PC-3 (cell line): ENCODE measurements at regions of chr3 and their contacts with region 1.

Region 1: DNA sequence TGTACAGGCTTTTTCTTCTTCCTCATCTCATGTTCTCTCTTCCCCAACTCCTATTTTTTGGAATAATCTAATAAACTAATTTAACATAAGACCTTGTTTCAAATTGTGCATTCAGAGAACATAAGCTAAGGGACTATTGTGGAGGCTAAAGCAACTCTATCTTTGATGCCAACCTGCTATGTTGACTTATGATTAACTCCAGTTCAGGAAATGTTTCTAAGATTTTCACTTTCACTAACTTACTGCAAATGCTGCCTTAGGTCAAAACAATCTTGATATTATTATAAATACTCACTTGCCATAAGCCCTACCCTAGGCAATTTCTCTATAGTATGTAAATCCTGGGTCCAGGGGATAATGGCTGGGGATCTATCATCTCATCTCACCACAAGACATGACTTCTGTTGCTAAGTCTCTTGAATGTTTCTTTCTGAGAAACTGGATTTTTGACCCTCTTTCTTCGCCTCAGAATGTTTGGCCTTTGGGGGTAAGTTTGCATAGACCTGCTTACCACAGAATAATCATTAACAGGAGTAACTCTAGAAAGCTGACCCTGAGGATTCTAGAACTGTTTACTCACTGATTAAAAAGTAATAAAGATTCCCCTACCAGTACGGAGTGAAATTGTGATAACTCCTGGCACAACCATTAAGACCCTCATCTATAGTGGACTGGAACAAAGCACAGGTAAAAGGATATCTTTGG is 768.1 kb downstream of the GBE1 start:
- DNase-seq: no peak
- ATAC-seq: no peak
- H3K4me3 ChIP-seq: no peak overlapping the region
- H3K27ac ChIP-seq: peak overlapping the region; percentile 59
- H3K4me1 ChIP-seq: peaks cover 21% of the 10 kb centered on the region
- H3K27me3 ChIP-seq: no peaks in the 10 kb centered on the region
- CTCF ChIP-seq: no peak

Region 2: DNA sequence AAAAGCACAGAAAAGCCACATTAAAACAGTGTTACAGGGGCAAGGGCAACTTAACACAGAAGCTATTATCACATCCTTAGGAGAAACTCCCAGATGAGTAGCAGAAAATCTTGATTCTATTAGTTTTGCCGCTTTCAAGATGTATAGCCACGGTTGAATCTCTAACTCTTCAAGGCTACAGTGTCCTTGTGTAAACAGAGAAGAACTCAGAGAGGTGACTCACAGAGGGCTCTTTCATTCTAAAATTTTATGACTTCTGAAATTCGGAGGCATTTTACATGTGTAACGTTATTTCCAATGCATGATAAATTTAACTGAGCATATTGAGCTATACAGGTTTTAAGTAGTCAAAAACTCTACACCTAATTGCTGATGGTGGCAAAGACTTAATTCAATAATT is 78.5 kb before region 1 on chr3:
- CTCF ChIA-PET with region 1: no interaction called
- POLR2A ChIA-PET with region 1: no interaction called
- intact Hi-C with region 1: loop called (anchors 2 kb)
- DNase-seq: peak; percentile 66
- ATAC-seq: peak; percentile 100
- H3K4me3 ChIP-seq: no peak overlapping the region
- H3K27ac ChIP-seq: no peak overlapping the region
- H3K4me1 ChIP-seq: peaks cover 8% of the 10 kb centered on the region
- H3K27me3 ChIP-seq: no peaks in the 10 kb centered on the region
- CTCF ChIP-seq: no peak

Region 3: DNA sequence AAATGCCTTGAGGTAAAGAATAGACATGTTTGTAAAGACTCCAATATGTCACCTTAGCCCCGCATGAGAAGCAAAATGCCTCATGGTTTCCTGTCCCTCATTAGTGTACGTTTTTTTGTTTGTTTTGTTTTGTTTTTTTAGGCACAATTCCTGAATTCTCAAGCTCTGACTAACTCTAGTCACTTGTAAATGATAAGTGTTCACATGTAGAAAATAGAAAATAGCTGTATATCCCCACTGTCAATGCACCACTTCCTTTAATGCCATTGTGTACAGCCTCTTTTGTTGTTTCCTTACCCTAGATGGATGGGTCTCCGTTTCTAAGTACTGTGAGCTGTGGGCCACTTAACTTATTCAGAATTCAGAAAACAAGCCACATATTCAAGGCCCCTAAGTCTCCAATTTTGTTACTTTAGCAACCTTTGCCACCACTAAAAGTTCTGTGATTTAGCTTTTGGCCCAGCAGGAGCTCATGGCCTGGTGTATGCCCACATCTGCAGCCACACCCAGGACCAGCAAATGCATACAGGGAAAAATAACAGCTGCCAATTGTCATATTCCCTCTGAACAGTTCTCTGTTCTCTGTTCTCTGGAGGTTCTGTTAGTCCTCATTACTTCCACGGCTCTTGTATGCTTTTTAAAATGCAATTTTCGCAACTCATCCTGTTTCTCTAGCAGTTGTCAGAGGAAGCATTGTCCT is 112.5 kb after region 1 on chr3:
- CTCF ChIA-PET with region 1: no interaction called
- POLR2A ChIA-PET with region 1: no interaction called
- intact Hi-C with region 1: loop called (anchors 1 kb)
- DNase-seq: peak; percentile 87
- ATAC-seq: peak; percentile 94
- H3K4me3 ChIP-seq: no peak overlapping the region; the same call in 1 of the 2 replicates
- H3K27ac ChIP-seq: peak overlapping the region; percentile 42
- H3K4me1 ChIP-seq: peaks cover 17% of the 10 kb centered on the region
- H3K27me3 ChIP-seq: no peaks in the 10 kb centered on the region
- CTCF ChIP-seq: no peak

Region 4: GRCh38 chr3:81289676-81290075 is 296.3 kb after region 1 on chr3:
- CTCF ChIA-PET with region 1: no interaction called
- POLR2A ChIA-PET with region 1: no interaction called
- intact Hi-C with region 1: no loop called
- DNase-seq: no peak
- ATAC-seq: no peak
- H3K4me3 ChIP-seq: no peak overlapping the region
- H3K27ac ChIP-seq: no peak overlapping the region
- H3K4me1 ChIP-seq: no peaks in the 10 kb centered on the region
- H3K27me3 ChIP-seq: no peaks in the 10 kb centered on the region
- CTCF ChIP-seq: no peak